ENCODE measurements at regions of chrX and their contacts with region 1.

Region 1: GRCh38 chrX:19824603-19825002 is 62.8 kb downstream of the SH3KBP1 start:
- DNase-seq: peak in 1 of 9 donors; percentile 19
- ATAC-seq: peak; percentile 49
- H3K4me3 ChIP-seq: no peak overlapping the region
- H3K4me3 Mint-ChIP-seq: peak overlapping the region in 4 of 10 donors; percentile 1 to 39 (median 16)
- H3K27ac ChIP-seq: no peak overlapping the region
- H3K27ac Mint-ChIP-seq: peak overlapping the region in 5 of 9 donors; percentile 8 to 62 (median 48)
- H3K4me1 ChIP-seq: peaks cover 12 to 30% of the 10 kb centered on the region in 2 donors
- H3K4me1 Mint-ChIP-seq: peaks cover 12 to 60% (median 43%) of the 10 kb centered on the region in 7 donors
- H3K27me3 ChIP-seq: no peaks in the 10 kb centered on the region
- H3K27me3 Mint-ChIP-seq: no peaks in the 10 kb centered on the region

Region 2: DNA sequence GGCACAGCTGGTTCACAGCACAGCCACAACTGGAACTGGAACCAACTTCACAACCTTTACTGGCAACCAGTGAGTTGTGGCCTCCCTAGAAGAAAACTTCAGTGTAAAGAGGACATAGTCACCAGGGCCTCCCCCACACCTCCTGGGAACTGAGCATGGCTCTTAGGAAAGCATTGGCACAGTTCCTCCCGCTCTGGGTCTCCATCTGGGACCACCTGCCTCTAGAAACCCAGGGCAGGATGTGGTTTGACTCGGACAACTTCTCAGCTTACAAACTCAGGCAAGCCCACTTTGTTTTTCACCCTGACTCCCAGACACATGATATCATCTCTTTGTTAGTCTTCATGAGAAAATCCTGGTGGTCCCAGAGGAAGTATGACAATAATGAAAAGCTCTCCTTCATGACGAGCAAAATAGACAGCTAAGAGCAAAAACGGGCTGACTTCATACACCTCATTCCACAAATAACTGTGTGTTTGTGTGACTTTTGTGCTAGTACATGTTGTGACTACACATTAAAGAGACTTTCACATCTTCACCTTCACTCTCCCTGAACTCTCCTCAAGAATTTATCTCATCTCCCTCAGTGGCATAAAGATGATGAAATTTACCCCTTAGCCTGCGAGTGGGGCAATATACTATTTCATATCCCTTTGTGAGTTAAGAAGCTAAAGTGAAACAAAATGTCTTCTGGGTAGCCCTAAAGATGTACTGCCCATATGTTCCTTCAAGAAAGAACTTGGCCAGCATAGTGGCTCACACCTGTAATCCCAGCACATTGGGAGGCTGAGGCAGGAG is 12.6 kb before region 1 on chrX:
- CTCF ChIA-PET with region 1: interaction called, 3 read pairs
- POLR2A ChIA-PET with region 1: interaction called, 9 read pairs
- intact Hi-C with region 1: loop called in 1 of 2 experiments (anchors 2 kb)
- DNase-seq: no peak
- ATAC-seq: no peak
- H3K4me3 ChIP-seq: no peak overlapping the region
- H3K4me3 Mint-ChIP-seq: peak overlapping the region in 8 of 10 donors; percentile 7 to 57 (median 41)
- H3K27ac ChIP-seq: no peak overlapping the region
- H3K27ac Mint-ChIP-seq: peak overlapping the region; percentile 52 to 86 (median 77)
- H3K4me1 ChIP-seq: peaks cover 14 to 25% of the 10 kb centered on the region in 2 donors
- H3K4me1 Mint-ChIP-seq: peaks cover 32 to 79% (median 61%) of the 10 kb centered on the region in 7 donors
- H3K27me3 ChIP-seq: no peaks in the 10 kb centered on the region
- H3K27me3 Mint-ChIP-seq: no peaks in the 10 kb centered on the region